Activated T-helper 2 cell treated with anti-CD3 and anti-CD28 coated beads, Interferon-gamma antibody, Interleukin-2, Interleukin-4, amounts not matched to agents 10 μg/mL and 5 μg/mL and 100 μg/mL, durations not matched to agents 14 hours and 24 hours and 36 hours (primary cell): ENCODE measurements at regions of chr12 and their contacts with region 1.

Region 1: GRCh38 chr12:71780237-71780822 is 25.7 kb downstream of the RAB21 start:
- DNase-seq: no peak
- H3K4me3 Mint-ChIP-seq: no peak overlapping the region
- H3K27ac Mint-ChIP-seq: no peak overlapping the region
- H3K4me1 Mint-ChIP-seq: peaks cover 5% of the 10 kb centered on the region
- H3K27me3 Mint-ChIP-seq: no peaks in the 10 kb centered on the region

Region 2: DNA sequence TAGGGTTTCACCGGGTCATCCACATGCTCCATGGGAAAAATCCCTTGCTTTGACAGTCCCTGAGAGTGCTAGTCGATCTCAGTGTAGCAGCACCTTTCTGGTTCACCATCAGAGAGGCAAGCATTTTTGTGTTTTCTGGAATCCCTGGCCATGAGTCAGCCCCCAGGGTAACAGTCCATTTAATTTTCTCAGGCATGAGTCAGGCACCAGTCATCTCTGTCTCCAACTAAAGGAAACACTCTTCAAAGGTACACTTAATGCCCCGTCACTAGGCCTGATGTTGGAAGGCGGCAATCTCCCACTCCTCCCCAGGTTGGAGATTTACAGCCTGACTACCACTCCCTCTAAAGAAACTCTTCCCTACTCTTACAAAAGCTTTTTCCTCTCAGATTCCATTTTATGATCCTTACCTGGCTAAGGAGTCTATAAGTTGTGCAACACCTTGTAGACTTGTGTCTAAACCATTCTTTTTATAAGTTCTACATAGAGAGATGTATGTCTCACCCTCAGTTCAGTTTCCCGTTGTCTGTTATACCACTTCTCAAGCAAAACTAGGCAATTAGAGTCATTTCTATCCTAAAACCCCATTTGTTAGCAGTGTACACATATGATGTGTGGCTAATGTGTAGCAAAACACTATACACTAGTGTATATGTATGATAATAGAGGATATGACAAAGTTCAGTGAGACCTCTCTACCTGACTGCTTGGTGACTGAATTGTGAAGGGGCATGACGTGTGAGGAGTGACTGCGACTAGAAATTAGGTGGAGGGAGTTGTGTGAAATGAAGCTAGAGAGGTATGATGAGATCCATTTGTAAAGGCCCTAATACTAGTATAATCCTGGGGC is 69.8 kb before region 1 on chr12:
- intact Hi-C with region 1: no loop called
- DNase-seq: no peak
- H3K4me3 Mint-ChIP-seq: no peak overlapping the region
- H3K27ac Mint-ChIP-seq: no peak overlapping the region
- H3K4me1 Mint-ChIP-seq: peaks cover 6% of the 10 kb centered on the region
- H3K27me3 Mint-ChIP-seq: peaks cover 11% of the 10 kb centered on the region

Region 3: DNA sequence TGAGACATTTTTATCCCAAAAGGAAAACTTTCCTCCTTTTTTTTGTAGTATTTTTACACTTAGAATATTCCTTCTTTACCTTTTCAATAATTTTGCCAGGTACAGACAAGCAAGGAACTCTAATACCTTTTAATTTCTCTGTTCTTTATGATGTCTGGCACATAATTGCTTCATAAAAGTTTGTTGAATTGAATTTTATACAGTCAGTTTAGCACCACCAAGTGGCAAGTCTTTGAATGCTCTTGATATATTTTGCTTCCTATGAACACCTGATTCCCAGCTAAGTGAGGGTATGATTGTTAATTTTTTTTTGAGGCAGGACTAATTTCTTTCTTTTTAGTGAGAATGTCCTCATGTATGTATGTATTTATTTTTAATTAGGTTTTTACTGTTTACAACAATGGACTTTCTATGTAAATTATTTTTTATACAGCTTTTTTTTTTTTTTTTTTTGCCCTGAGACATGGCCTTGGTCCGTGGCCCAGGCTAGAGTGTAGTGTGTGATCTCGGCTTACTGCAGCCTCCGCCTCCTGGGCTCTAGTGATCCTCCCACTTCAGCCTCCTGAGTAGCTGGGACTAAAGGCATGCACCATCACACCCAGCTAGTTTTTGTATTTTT is 66.1 kb after region 1 on chr12:
- intact Hi-C with region 1: loop called (anchors 2 kb)
- DNase-seq: no peak
- H3K4me3 Mint-ChIP-seq: no peak overlapping the region
- H3K27ac Mint-ChIP-seq: no peak overlapping the region
- H3K4me1 Mint-ChIP-seq: peaks cover 13% of the 10 kb centered on the region
- H3K27me3 Mint-ChIP-seq: no peaks in the 10 kb centered on the region

Region 4: DNA sequence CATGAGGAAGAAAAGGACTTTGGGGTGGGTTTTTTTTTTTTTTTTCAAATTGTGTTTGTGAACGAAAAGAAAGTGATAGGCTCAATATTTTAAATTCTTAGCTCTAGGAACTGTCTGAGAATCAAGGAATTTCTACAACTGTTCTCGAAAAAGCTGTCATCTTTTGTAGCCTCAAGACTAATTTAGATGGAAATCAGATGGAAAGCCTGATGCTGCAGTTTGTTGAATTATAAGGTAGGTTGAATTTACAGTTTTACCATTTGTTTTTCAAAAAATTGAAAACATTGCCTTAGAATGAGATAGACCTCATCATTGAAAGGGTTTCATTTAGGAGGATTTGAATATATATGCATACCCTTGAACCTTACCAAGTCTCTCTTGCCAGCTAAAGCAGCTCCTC is 382.5 kb after region 1 on chr12:
- intact Hi-C with region 1: no loop called
- DNase-seq: no peak
- H3K4me3 Mint-ChIP-seq: no peak overlapping the region
- H3K27ac Mint-ChIP-seq: no peak overlapping the region
- H3K4me1 Mint-ChIP-seq: no peaks in the 10 kb centered on the region
- H3K27me3 Mint-ChIP-seq: no peaks in the 10 kb centered on the region